HAP-1 (cell line): ENCODE measurements at regions of chr13 and their contacts with region 1.

Region 1: DNA sequence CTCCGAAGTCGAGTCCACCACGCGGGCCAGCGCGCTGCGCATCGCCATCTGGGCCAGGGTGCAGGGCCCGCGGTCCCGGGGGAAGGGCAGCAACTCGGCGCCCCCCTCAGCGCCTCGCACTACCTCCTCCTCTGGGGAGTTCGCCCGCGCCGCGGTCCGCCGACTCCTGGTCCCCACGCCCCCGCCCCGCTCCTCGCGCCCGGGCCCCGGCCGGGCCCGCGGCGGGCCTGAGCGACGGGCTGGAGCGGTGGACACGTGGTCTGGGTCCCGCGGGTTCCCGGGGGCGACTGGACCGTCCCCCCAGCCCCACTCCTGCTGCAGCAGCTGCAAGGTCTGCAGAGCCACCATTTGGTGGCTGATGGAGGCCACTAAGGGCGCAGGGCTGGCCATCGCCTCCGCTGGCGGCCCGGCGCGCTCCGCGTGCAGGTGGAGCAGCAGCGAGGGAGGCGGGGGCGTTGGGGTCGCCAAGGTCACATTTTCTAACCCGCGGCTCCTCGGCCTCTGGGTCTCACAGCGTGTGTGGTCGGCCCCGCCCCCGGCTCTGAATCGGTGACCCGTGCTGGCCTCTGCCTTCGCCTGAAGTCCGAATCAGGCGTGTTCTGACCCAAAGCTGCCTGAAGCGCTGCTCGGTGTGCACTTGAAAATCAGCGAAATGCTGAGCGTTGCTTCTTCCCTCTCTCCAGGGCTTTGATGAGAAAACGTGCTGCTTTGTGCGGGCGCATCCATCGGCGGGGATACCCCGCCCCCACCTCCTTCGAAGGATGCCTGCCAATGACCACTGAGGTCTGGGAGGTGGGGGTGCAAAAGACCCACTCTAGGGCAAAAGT is at the start of gene DLEU7:
- DNase-seq: no peak
- H3K4me3 ChIP-seq: no peak within 1 kb of the TSS
- H3K4me1 ChIP-seq: no peaks in the 10 kb centered on the region
- H3K27me3 ChIP-seq: no peaks in the 10 kb centered on the region

Region 2: DNA sequence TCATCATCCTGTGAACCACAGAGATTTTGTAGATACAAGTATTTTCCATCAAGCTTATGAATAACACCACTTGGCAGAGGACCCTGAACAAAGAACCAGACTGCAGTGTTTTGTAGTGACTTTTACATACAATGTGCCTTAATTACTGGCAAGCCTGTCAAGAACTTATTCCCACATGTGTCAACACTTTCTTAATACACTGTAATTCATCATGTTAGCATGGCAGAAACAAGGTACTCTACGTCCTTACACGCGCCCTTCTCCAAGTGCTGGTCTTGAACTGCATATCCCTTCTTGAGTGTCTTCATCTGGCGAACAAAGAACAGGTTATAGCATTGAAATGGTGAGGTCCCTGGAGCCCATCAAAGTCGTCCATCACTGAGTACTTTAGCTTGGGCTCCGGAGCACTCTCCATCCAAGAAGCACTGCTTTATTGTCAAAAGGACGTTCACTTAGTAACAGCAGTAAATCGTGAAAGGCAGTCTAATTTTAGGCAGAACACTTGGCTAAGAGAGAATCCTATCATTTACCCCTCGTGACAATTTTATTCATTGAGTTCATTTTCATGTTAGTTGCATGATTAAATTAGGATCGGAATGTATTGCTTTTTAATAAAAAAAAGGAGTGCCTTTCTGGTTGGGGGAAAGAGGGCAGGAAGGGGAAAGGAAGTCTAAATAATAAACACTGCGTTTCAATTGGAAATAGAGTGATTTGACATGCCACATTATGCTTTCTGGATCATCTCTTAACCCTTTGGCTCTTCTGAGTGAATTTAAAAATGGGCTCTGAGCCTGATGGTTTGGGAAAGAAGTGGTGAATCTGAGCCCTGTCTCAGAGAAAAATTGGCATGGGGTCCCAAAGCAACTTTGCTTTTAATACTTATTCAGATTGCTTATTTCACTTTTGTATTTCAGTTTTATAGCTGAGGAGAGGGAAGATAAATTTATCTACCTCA is 376.0 kb before region 1 on chr13:
- in situ Hi-C with region 1: no loop called
- DNase-seq: no peak
- H3K4me3 ChIP-seq: no peak overlapping the region
- H3K4me1 ChIP-seq: no peaks in the 10 kb centered on the region
- H3K27me3 ChIP-seq: no peaks in the 10 kb centered on the region

Region 3: DNA sequence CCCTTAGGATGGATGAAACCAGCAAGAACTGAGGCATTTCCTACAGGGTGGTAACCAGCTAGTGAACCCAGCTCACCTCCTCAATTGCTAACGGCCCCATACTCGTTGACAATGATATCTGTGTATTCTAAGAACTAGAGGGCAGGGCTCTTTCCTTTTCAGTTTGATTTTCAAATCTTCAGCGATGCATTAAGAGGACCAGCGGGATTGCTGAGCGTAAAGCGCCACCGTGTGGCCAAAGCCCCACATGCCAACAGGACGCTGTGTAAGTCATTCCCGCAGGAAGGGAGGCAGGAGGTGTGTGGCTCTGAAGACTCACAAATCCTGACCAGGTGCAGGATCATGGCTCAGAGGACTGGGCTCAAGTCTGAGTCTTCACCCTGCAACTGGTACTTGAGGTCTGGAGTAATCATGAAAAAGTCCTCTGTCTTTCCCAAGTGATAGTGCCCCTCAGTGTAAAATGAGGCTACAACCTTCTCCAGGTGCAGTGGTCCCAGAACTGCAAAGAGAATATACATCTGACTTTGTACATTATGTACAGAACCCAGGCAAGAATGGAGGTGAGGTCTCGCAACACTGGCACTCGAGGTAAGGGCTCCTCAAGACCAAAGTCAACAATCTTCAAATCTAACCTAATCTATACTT is 226.7 kb after region 1 on chr13:
- in situ Hi-C with region 1: loop called (anchors 25 kb)
- DNase-seq: peak; percentile 79 to 88
- H3K4me3 ChIP-seq: no peak overlapping the region
- H3K4me1 ChIP-seq: peaks cover 3% of the 10 kb centered on the region
- H3K27me3 ChIP-seq: peaks cover 4% of the 10 kb centered on the region; the same call in 1 of the 2 replicates

Region 4: GRCh38 chr13:51502153-51502651 is 658.7 kb after region 1 on chr13:
- in situ Hi-C with region 1: no loop called
- DNase-seq: no peak
- H3K4me3 ChIP-seq: no peak overlapping the region
- H3K4me1 ChIP-seq: no peaks in the 10 kb centered on the region
- H3K27me3 ChIP-seq: no peaks in the 10 kb centered on the region; the same call in 1 of the 2 replicates